Activated naive CD4-positive, alpha-beta T cell treated with anti-CD3 and anti-CD28 coated beads for 36 hours (primary cell): ENCODE measurements at regions of chr16 and their contacts with region 1.

Region 1: GRCh38 chr16:27326738-27327585 is 13.2 kb downstream of the IL4R start:
- DNase-seq: peak; percentile 69
- H3K4me3 Mint-ChIP-seq: peak overlapping the region; percentile 55
- H3K27ac Mint-ChIP-seq: peak overlapping the region; percentile 91
- H3K4me1 Mint-ChIP-seq: peaks cover 84% of the 10 kb centered on the region
- H3K27me3 Mint-ChIP-seq: no peaks in the 10 kb centered on the region

Region 2: DNA sequence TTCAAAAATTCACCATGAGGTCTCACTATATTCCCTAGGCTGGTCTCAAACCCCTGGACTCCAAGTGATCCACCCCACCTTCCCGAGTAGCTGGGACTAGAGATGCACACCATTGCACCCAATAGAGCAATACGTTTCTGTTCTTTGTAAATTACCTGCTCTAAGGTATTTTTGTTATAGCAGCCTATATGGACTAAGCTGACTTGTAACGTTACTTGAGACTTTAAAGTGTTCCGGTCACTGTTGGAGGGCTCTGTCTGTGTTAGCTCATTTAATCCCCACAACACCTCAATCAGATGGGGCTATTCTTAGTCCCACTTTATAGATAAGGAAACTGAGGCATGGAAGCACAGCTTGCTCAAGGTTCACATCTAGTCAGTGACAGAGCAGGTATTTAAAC is 12.2 kb after region 1 on chr16:
- CTCF ChIA-PET with region 1: no interaction called
- intact Hi-C with region 1: no loop called
- DNase-seq: no peak
- H3K4me3 Mint-ChIP-seq: no peak overlapping the region
- H3K27ac Mint-ChIP-seq: no peak overlapping the region
- H3K4me1 Mint-ChIP-seq: peaks cover 39% of the 10 kb centered on the region
- H3K27me3 Mint-ChIP-seq: no peaks in the 10 kb centered on the region

Region 3: GRCh38 chr16:27549859-27550581 is 223.1 kb after region 1 on chr16 and contains the starts of genes GTF3C1 and KATNIP:
- CTCF ChIA-PET with region 1: no interaction called
- intact Hi-C with region 1: loop called (anchors 10 kb)
- DNase-seq: peak; percentile 100
- H3K4me3 Mint-ChIP-seq: peak within 1 kb of the TSS; percentile 94
- H3K27ac Mint-ChIP-seq: peak within 1 kb of the TSS; percentile 86
- H3K4me1 Mint-ChIP-seq: peaks cover 36% of the 10 kb centered on the region
- H3K27me3 Mint-ChIP-seq: no peaks in the 10 kb centered on the region
- total RNA-seq, gene GTF3C1: 52.5 to 54.1 TPM
- total RNA-seq, gene KATNIP: 7.6 to 9.0 TPM

Region 4: GRCh38 chr16:27847030-27847550 is 520.1 kb after region 1 on chr16:
- CTCF ChIA-PET with region 1: no interaction called
- intact Hi-C with region 1: no loop called
- DNase-seq: no peak
- H3K4me3 Mint-ChIP-seq: no peak overlapping the region
- H3K27ac Mint-ChIP-seq: no peak overlapping the region
- H3K4me1 Mint-ChIP-seq: no peaks in the 10 kb centered on the region
- H3K27me3 Mint-ChIP-seq: peaks cover 31% of the 10 kb centered on the region